AG04450 (cell line): ENCODE measurements at regions of chr16 and their contacts with region 1.

Region 1: DNA sequence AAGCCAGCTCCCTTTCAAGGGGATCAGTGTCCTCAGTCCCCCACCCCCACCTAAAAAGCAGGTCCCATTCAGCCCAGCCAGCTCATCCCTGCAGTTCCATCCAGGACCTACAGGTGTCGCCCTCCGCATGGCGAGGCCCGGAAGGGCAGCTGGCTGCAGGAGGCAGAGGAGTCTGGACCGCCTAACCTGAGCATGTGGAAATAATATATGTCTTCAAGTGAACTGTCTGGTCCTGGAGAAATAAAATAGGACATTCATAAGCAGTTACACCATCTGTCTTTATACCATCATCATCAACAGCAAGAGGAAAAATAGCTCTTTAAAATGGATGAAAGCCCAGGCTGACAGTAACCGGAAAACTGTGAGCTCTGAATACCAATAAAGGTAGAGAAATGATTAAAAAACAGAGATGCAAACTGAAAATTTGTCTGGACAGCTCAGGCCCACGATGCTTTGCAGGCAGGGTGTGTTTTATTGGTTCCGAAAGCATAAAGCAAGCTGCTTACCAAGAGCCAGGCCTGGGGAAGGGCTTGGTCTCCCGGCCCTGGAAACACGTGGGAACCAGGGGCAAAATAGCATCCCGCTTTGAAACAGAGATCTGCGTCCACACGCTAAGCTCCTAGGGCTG is 215.2 kb downstream of the ZFHX3 start:
- DNase-seq: no peak
- H3K4me3 ChIP-seq: no peak overlapping the region
- H3K27ac ChIP-seq: no peak overlapping the region
- H3K27me3 ChIP-seq: no peaks in the 10 kb centered on the region
- CTCF ChIP-seq: peak; percentile 100

Region 2: GRCh38 chr16:71460236-71460635 is 1372.5 kb before region 1 on chr16:
- CTCF ChIA-PET with region 1: no interaction called
- POLR2A ChIA-PET with region 1: no interaction called
- DNase-seq: peak; percentile 52
- H3K4me3 ChIP-seq: peak overlapping the region; percentile 37
- H3K27ac ChIP-seq: peak overlapping the region; percentile 78
- H3K27me3 ChIP-seq: no peaks in the 10 kb centered on the region
- CTCF ChIP-seq: no peak

Region 3: DNA sequence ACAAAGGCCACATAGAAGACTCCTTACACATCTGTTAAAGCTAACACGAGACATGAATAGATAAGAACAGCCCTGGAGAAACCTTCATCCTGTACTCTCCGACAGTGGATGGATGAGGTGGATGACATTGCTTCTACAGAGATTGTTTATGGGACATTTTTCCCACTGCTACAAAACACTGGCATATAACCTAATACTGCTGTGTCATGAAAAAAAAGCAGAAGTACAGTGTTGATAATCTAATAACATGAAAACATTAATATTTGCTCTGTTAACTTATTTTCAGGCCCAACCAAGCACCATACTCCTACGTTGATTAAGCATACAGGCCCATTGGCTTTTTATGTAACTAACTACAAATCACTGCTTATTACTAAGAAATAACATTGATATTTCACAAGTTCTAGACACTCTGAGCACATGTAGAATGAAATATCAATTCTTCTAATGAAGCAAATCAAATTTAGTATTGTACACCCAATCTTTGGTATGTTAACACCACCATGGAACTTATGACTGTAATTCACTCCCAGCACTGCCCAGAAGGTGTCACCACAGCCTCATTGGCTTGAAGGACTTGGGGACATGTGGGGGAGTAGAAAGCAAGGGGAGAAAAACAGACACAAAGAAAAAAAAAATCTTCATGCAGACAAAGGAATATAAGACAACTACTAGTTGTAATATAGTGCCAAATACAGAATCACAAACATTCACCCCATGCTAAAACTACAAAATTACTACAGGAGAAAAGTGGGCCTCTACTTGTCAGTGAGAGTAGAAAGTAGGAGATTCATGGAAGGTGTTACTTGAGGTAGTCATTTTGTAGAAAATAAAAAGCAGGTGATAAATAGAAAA is 330.8 kb before region 1 on chr16:
- CTCF ChIA-PET with region 1: interaction called, 22 read pairs
- POLR2A ChIA-PET with region 1: interaction called, 3 read pairs
- DNase-seq: peak; percentile 45
- H3K4me3 ChIP-seq: no peak overlapping the region
- H3K27ac ChIP-seq: no peak overlapping the region
- H3K27me3 ChIP-seq: no peaks in the 10 kb centered on the region
- CTCF ChIP-seq: peak; percentile 98

Region 4: GRCh38 chr16:72800524-72801161 is 32.1 kb before region 1 on chr16:
- CTCF ChIA-PET with region 1: interaction called, 23 read pairs
- POLR2A ChIA-PET with region 1: no interaction called
- DNase-seq: no peak
- H3K4me3 ChIP-seq: no peak overlapping the region
- H3K27ac ChIP-seq: peak overlapping the region; percentile 31
- H3K27me3 ChIP-seq: no peaks in the 10 kb centered on the region
- CTCF ChIP-seq: no peak

Region 5: DNA sequence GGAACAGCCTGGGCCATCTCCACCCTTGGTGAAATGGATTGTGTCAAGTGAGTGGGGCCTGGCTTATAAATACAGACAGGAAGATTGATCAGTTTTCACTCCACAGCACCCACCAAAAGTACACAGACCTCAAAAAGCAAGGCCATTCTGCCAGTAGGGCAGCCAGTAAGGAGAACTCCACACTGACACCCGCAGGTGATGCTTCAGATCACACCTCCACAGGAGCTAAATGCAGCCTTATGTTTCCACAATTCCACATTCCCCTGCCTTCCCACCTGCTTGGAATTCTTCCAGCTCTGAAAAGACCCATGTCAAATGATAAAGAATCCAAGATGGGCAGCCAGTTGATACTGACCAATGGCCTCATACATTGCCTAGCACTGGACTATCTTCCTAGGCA is 24.1 kb after region 1 on chr16:
- CTCF ChIA-PET with region 1: interaction called, 120 read pairs
- POLR2A ChIA-PET with region 1: no interaction called
- DNase-seq: no peak
- H3K4me3 ChIP-seq: no peak overlapping the region
- H3K27ac ChIP-seq: no peak overlapping the region
- H3K27me3 ChIP-seq: no peaks in the 10 kb centered on the region
- CTCF ChIP-seq: peak; percentile 42

Region 6: GRCh38 chr16:72921630-72922029 is 88.9 kb after region 1 on chr16:
- CTCF ChIA-PET with region 1: interaction called, 19 read pairs
- POLR2A ChIA-PET with region 1: no interaction called
- DNase-seq: no peak
- H3K4me3 ChIP-seq: peak overlapping the region; percentile 34
- H3K27ac ChIP-seq: no peak overlapping the region
- H3K27me3 ChIP-seq: no peaks in the 10 kb centered on the region
- CTCF ChIP-seq: no peak

Region 7: DNA sequence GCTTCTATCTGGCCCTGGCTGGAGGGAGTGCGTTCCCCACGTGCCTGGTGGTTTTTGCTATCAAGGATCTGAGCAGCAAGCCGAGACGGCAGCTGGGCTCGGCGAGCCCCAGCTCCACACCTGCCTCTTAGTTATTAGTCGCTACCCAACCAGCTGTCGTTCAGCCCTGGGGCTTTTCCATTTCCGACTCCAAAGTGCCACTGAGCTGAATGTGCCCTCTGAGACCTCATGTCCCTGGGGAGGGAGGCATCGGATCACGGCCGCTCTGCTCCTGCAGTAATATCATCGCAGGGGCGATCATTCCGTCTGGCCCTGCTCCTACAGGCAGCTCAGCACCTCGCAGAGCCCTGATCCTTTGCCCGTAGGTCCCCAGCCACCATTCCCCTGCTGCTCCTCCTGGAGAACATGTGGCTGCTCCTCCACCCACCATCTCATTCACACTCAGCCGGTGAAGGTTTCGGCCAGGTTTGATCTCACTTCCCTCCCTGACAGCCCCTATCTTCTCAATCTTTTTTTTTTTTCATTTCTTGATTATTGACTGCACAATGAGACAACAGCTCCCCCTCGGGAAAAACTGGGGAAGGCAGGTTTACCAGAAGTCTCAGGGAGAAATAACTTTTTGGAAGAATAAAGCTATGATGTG is 128.5 kb after region 1 on chr16:
- CTCF ChIA-PET with region 1: interaction called, 12 read pairs
- POLR2A ChIA-PET with region 1: no interaction called
- DNase-seq: no peak
- H3K4me3 ChIP-seq: no peak overlapping the region
- H3K27ac ChIP-seq: no peak overlapping the region
- H3K27me3 ChIP-seq: no peaks in the 10 kb centered on the region
- CTCF ChIP-seq: peak; percentile 56

Region 8: GRCh38 chr16:73068541-73069401 is 236.0 kb after region 1 on chr16:
- CTCF ChIA-PET with region 1: interaction called, 38 read pairs
- POLR2A ChIA-PET with region 1: no interaction called
- DNase-seq: peak; percentile 94
- H3K4me3 ChIP-seq: peak overlapping the region; percentile 21; the same call in 1 of the 2 replicates
- H3K27ac ChIP-seq: peak overlapping the region; percentile 100
- H3K27me3 ChIP-seq: no peaks in the 10 kb centered on the region
- CTCF ChIP-seq: 0 out of 2 replicates have a peak, but pooled peaks have one; percentile 6